IMR-90 (cell line): ENCODE measurements at regions of chr10 and their contacts with region 1.

Region 1: GRCh38 chr10:82796510-82796909 is 921.5 kb downstream of the NRG3 start:
- DNase-seq: no peak
- ATAC-seq: no peak
- H3K4me3 ChIP-seq: no peak overlapping the region
- H3K27ac ChIP-seq: no peak overlapping the region
- H3K4me1 ChIP-seq: no peaks in the 10 kb centered on the region
- H3K27me3 ChIP-seq: no peaks in the 10 kb centered on the region
- CTCF ChIP-seq: peak; percentile 41
- POLR2A ChIP-seq: no peak
- RAD21 ChIP-seq: peak; percentile 45

Region 2: GRCh38 chr10:82821043-82821442 is 24.5 kb after region 1 on chr10:
- CTCF ChIA-PET with region 1: no interaction called
- POLR2A ChIA-PET with region 1: no interaction called
- dilution Hi-C with region 1: no loop called
- in situ Hi-C with region 1: no loop called
- intact Hi-C with region 1: no loop called
- DNase-seq: no peak
- ATAC-seq: no peak
- H3K4me3 ChIP-seq: no peak overlapping the region
- H3K27ac ChIP-seq: no peak overlapping the region
- H3K4me1 ChIP-seq: no peaks in the 10 kb centered on the region
- H3K27me3 ChIP-seq: no peaks in the 10 kb centered on the region
- CTCF ChIP-seq: no peak
- POLR2A ChIP-seq: no peak
- RAD21 ChIP-seq: no peak

Region 3: GRCh38 chr10:83871187-83872081 is 1074.9 kb after region 1 on chr10:
- CTCF ChIA-PET with region 1: no interaction called
- POLR2A ChIA-PET with region 1: no interaction called
- dilution Hi-C with region 1: no loop called
- in situ Hi-C with region 1: loop called (anchors 25 kb)
- intact Hi-C with region 1: loop called (anchors 2 kb)
- DNase-seq: peak; percentile 38
- ATAC-seq: peak; percentile 94
- H3K4me3 ChIP-seq: no peak overlapping the region
- H3K27ac ChIP-seq: no peak overlapping the region
- H3K4me1 ChIP-seq: no peaks in the 10 kb centered on the region
- H3K27me3 ChIP-seq: no peaks in the 10 kb centered on the region
- CTCF ChIP-seq: peak; percentile 84
- POLR2A ChIP-seq: no peak
- RAD21 ChIP-seq: peak; percentile 88

Region 4: GRCh38 chr10:84097787-84098353 is 1301.4 kb after region 1 on chr10:
- CTCF ChIA-PET with region 1: no interaction called
- POLR2A ChIA-PET with region 1: no interaction called
- dilution Hi-C with region 1: no loop called
- in situ Hi-C with region 1: no loop called
- intact Hi-C with region 1: loop called (anchors 5 kb)
- DNase-seq: peak; percentile 10
- ATAC-seq: peak; percentile 32; the same call in 1 of the 2 replicates
- H3K4me3 ChIP-seq: no peak overlapping the region
- H3K27ac ChIP-seq: no peak overlapping the region
- H3K4me1 ChIP-seq: no peaks in the 10 kb centered on the region
- H3K27me3 ChIP-seq: no peaks in the 10 kb centered on the region
- CTCF ChIP-seq: peak; percentile 67
- POLR2A ChIP-seq: no peak
- RAD21 ChIP-seq: peak; percentile 60